Common myeloid progenitor, CD34-positive (primary cell): ENCODE measurements at regions of chr3 and their contacts with region 1.

Region 1: DNA sequence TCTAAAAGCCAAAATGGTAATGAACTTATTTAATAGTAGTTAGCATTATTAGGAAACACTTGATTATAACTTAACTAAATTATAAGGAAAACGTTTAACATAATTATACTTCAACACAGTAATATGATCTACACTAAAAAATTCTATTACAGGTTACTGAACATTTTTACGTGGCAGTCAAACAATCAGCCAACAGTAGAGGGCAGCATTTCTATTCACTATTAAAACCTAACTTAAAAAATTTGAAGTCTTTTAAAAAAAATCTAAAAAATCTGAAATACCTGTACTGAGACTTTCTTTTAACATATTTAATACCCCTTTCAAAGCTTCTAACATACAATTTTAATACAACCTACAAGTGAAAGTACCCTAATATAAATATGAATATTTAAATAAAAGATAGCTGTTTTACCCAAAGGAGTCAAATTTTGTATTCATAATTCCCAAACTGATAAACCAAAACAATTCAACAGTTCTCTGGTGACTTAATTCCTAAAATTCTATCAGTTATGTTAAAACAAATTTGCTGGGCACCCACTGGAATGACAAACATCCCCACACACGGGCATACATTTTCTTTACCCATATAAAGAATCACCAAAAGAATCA is 41.5 kb downstream of the DLG1 start:
- DNase-seq: peak; percentile 61 to 79 (median 74)
- H3K4me3 ChIP-seq: no peak overlapping the region
- H3K27ac ChIP-seq: no peak overlapping the region
- H3K4me1 ChIP-seq: peaks cover 0 to 12% (median 2%) of the 10 kb centered on the region in 4 experiments
- H3K27me3 ChIP-seq: no peaks in the 10 kb centered on the region

Region 2: DNA sequence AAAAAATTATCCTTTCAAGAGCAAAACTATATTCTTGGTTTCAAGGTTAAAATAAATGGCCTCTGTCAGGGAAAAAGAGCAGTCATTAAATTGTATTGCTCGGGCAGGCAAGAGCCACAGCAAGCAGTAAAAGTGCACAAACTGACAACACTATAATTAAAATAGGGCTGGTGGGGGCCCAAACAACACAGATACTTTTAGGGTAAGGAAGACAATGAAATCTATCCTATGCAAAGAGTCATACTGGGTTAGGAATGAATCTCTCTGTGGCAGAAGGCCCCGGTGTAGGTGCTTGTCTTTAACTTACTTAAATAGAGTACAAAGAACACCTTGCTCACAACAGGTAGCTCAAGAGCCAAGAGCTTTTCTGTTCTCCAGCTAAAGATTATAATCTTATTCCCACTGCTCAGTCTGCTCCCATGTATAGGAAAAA is 53.2 kb before region 1 on chr3:
- CTCF ChIA-PET with region 1: no interaction called
- POLR2A ChIA-PET with region 1: no interaction called
- DNase-seq: no peak
- H3K4me3 ChIP-seq: no peak overlapping the region
- H3K27ac ChIP-seq: no peak overlapping the region
- H3K4me1 ChIP-seq: peaks cover 0 to 21% (median 9%) of the 10 kb centered on the region in 4 experiments
- H3K27me3 ChIP-seq: no peaks in the 10 kb centered on the region

Region 3: GRCh38 chr3:197268294-197268693 is 11.4 kb after region 1 on chr3:
- CTCF ChIA-PET with region 1: interaction called, 31 read pairs
- POLR2A ChIA-PET with region 1: no interaction called
- DNase-seq: no peak
- H3K4me3 ChIP-seq: no peak overlapping the region
- H3K27ac ChIP-seq: no peak overlapping the region
- H3K4me1 ChIP-seq: no peaks in the 10 kb centered on the region
- H3K27me3 ChIP-seq: no peaks in the 10 kb centered on the region

Region 4: GRCh38 chr3:197305854-197306253 is 48.9 kb after region 1 on chr3:
- CTCF ChIA-PET with region 1: no interaction called
- POLR2A ChIA-PET with region 1: no interaction called
- DNase-seq: no peak
- H3K4me3 ChIP-seq: no peak overlapping the region
- H3K27ac ChIP-seq: no peak overlapping the region
- H3K4me1 ChIP-seq: no peaks in the 10 kb centered on the region
- H3K27me3 ChIP-seq: peaks cover 0 to 3% (median 0%) of the 10 kb centered on the region in 5 experiments

Region 5: DNA sequence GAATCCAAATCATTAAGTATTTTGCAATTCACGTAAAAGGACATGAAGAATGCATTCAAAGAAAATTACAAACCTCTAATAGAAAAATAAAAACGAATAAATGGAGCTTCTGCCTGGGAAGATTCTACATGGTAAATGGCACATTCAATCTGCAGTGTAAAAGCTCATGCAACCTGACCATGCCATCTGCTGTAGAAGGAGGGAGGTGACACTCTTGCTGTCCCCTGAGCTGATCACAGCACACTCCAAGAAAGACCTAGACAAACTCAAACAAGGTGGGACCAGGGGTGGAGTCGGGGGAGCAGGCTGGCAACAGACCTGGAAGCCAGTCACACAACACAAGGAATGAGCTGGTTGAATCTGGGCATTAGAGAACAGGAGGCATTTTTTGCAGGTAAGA is 197.1 kb after region 1 on chr3:
- CTCF ChIA-PET with region 1: interaction called, 16 read pairs
- POLR2A ChIA-PET with region 1: no interaction called
- DNase-seq: peak; percentile 41 to 71 (median 62)
- H3K4me3 ChIP-seq: no peak overlapping the region
- H3K27ac ChIP-seq: no peak overlapping the region
- H3K4me1 ChIP-seq: peaks cover 0 to 15% (median 12%) of the 10 kb centered on the region in 4 experiments
- H3K27me3 ChIP-seq: peaks cover 0 to 10% (median 2%) of the 10 kb centered on the region in 5 experiments

Region 6: GRCh38 chr3:197501879-197502620 is 245.1 kb after region 1 on chr3:
- CTCF ChIA-PET with region 1: interaction called, 17 read pairs
- POLR2A ChIA-PET with region 1: no interaction called
- DNase-seq: peak in 2 of 3 donors; percentile 26 to 45
- H3K4me3 ChIP-seq: no peak overlapping the region
- H3K27ac ChIP-seq: no peak overlapping the region
- H3K4me1 ChIP-seq: peaks cover 0 to 4% (median 0%) of the 10 kb centered on the region in 4 experiments
- H3K27me3 ChIP-seq: peaks cover 0 to 4% (median 0%) of the 10 kb centered on the region in 5 experiments

Region 7: GRCh38 chr3:197511130-197511529 is 254.2 kb after region 1 on chr3:
- CTCF ChIA-PET with region 1: interaction called, 24 read pairs
- POLR2A ChIA-PET with region 1: no interaction called
- DNase-seq: no peak
- H3K4me3 ChIP-seq: no peak overlapping the region
- H3K27ac ChIP-seq: no peak overlapping the region
- H3K4me1 ChIP-seq: peaks cover 0 to 9% (median 7%) of the 10 kb centered on the region in 4 experiments
- H3K27me3 ChIP-seq: peaks cover 0 to 3% (median 0%) of the 10 kb centered on the region in 5 experiments